Vagina (tissue), 2 donors: ENCODE measurements at regions of chr16 and their contacts with region 1.

Region 1: GRCh38 chr16:75471723-75472633 is 7.5 kb upstream of the TMEM170A start:
- DNase-seq: no peak
- H3K4me3 ChIP-seq: no peak overlapping the region
- H3K27ac ChIP-seq: no peak overlapping the region
- H3K4me1 ChIP-seq: no peaks in the 10 kb centered on the region
- H3K27me3 ChIP-seq: no peaks in the 10 kb centered on the region
- CTCF ChIP-seq: peak; percentile 37 to 80 (median 65)
- POLR2A ChIP-seq: no peak

Region 2: GRCh38 chr16:75764154-75764768 is 292.3 kb after region 1 on chr16:
- intact Hi-C with region 1: loop called (anchors 10 kb)
- DNase-seq: no peak
- H3K4me3 ChIP-seq: no peak overlapping the region
- H3K27ac ChIP-seq: no peak overlapping the region
- H3K4me1 ChIP-seq: no peaks in the 10 kb centered on the region
- H3K27me3 ChIP-seq: no peaks in the 10 kb centered on the region
- CTCF ChIP-seq: peak; percentile 68 to 79 (median 70)
- POLR2A ChIP-seq: no peak

Region 3: GRCh38 chr16:75841517-75841916 is 369.5 kb after region 1 on chr16:
- intact Hi-C with region 1: no loop called
- DNase-seq: no peak
- H3K4me3 ChIP-seq: no peak overlapping the region
- H3K27ac ChIP-seq: no peak overlapping the region
- H3K4me1 ChIP-seq: no peaks in the 10 kb centered on the region
- H3K27me3 ChIP-seq: no peaks in the 10 kb centered on the region
- CTCF ChIP-seq: no peak
- POLR2A ChIP-seq: no peak